OCI-LY7 (cell line): ENCODE measurements at regions of chr2 and their contacts with region 1.

Region 1: DNA sequence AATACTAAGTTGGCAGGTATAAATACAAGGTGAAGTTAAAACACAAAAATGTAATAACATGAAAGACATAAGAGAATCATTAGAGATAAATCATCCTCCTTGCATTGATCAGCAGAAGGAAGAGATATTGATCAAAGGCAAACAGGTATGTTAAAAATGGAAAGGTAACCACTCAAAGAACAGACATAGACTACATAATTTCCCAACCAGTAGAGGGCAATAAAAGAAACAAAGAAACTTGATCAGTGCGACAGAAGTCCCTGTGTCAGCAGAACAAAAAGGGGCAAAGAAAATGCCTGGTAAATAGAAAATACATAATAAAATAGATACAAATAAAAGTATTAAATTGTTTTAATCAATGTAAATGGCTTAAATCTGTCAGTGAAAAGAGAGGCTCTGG is 53.6 kb downstream of the FAM228A start:
- DNase-seq: peak; percentile 27
- H3K4me3 ChIP-seq: no peak overlapping the region
- H3K27ac ChIP-seq: no peak overlapping the region
- H3K4me1 ChIP-seq: no peaks in the 10 kb centered on the region
- CTCF ChIP-seq: peak; percentile 78

Region 2: GRCh38 chr2:24342110-24342910 is 113.8 kb after region 1 on chr2:
- CTCF ChIA-PET with region 1: no interaction called
- POLR2A ChIA-PET with region 1: no interaction called
- intact Hi-C with region 1: no loop called
- DNase-seq: peak; percentile 23
- H3K4me3 ChIP-seq: no peak overlapping the region
- H3K27ac ChIP-seq: peak overlapping the region; percentile 8
- H3K4me1 ChIP-seq: peaks cover 29% of the 10 kb centered on the region
- CTCF ChIP-seq: no peak

Region 3: DNA sequence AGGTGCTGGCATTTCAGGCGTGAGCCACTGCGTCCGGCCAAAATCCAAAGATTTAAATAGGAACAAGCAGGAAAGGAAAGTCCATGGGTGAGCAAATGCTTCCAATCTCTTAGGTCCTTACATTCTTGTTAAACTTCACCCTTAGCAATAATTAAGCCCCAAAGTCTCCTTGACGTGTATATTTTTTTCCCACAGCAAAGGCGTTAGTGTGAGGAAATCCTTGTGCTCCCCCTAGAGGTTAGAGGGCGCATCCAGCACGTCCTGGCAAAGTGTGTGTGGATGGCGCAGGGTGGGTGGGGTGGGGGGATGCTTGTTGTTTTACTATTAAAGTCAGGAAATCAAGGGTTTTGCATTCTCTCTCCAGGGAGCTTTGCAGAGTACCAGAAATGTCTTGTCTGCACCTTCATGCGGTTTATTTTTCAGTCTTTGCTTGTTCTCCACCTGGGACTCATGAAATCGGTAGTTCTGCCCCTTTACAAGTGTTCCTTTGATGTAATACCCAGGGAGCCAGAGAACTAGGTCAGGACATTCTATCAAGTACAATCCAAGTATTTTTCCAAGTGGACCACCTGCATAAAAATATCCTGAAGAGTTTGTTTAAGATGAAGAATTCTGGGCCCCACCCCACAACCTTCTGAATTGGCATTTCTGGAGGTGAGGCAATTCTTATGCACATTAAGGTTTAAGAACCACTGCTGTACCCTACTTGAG is 154.0 kb after region 1 on chr2:
- CTCF ChIA-PET with region 1: no interaction called
- POLR2A ChIA-PET with region 1: interaction called, 6 read pairs
- intact Hi-C with region 1: loop called (anchors 1 kb)
- DNase-seq: peak; percentile 79
- H3K4me3 ChIP-seq: no peak overlapping the region
- H3K27ac ChIP-seq: no peak overlapping the region
- H3K4me1 ChIP-seq: peaks cover 5% of the 10 kb centered on the region
- CTCF ChIP-seq: peak; percentile 71